ENCODE measurements at regions of chr9 and their contacts with region 1.

Region 1: DNA sequence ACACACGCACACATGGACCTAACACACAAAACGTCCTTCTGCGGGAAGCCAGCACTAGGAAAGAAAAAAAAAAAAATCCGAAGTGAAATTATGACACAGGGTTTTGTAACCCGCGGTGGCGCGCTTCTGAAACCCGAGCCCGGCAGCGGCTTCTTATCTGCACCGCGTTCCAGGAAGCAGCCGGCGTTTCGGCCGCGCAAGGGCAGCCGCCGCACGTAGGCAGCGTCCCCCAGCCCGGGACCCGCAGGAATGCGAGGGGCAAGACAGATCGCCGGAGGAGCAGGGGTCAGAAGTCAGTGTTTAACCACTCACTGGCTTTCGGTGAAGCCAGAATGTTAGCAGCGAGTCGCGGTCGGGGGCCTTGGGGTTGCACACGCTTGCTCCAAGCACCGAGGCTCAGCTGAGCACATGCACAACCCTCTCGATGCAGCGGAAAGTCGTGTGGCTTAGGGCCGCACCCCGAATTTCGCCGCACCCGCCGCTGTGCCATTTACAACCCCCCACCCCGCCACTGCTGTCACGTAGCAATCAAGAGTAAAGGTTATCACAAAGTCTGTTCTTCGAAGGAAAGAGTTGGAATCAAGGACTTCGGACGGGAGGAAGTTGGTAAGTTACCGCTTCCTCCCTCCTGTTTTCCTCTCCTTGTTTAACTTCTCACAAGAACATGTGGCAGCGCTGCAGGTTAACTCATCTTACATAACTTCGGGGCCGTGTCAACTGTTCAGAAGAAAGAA is 167.9 kb downstream of the AUH start:
- DNase-seq: peak; percentile 52
- ATAC-seq: peak; percentile 72
- H3K4me3 Mint-ChIP-seq: peak overlapping the region; percentile 86
- H3K27ac Mint-ChIP-seq: peak overlapping the region; percentile 79
- H3K4me1 Mint-ChIP-seq: peaks cover 30% of the 10 kb centered on the region
- H3K27me3 Mint-ChIP-seq: no peaks in the 10 kb centered on the region
- CTCF ChIP-seq: no peak

Region 2: DNA sequence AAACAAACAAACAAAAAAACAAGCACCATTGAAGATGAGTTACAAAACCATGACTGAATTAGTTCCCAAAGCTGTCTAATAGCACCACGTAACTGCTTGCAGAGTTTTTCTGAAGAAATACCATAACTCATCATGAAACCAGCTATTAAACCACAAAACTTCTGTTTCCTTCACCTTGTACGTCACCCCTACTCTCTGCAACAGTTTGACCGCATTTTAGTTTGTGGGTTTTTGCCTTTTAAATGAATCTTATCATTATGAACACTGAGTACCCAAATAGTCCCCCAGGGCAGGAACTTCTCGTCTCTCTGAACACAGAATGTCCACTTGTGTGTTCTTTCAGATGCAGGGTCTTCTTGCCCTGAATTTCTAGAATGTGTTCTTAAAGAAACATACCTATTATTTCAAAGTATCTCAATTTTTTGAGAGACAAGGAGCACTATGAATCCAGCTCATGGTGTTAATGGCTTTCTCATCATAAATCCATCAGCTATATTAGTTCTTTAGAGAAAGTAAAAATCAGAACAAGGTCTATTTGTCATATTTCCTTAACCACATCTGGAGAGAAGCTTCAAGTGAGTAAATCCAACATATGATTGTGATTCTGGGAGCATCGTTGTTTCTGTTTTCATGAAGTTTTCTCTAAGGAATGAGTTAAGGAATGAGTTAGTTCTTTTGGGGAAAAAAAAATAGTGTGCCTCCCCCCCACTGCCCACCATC is 42.7 kb before region 1 on chr9:
- CTCF ChIA-PET with region 1: no interaction called
- POLR2A ChIA-PET with region 1: interaction called, 15 read pairs
- intact Hi-C with region 1: loop called (anchors 1 kb)
- DNase-seq: no peak
- ATAC-seq: peak; percentile 77
- H3K4me3 Mint-ChIP-seq: peak overlapping the region; percentile 30
- H3K27ac Mint-ChIP-seq: peak overlapping the region; percentile 62
- H3K4me1 Mint-ChIP-seq: peaks cover 50% of the 10 kb centered on the region
- H3K27me3 Mint-ChIP-seq: no peaks in the 10 kb centered on the region
- CTCF ChIP-seq: no peak

Region 3: GRCh38 chr9:91164724-91165520 is 28.9 kb before region 1 on chr9:
- CTCF ChIA-PET with region 1: no interaction called
- POLR2A ChIA-PET with region 1: no interaction called
- intact Hi-C with region 1: loop called (anchors 2 kb)
- DNase-seq: no peak
- ATAC-seq: peak; percentile 59
- H3K4me3 Mint-ChIP-seq: no peak overlapping the region
- H3K27ac Mint-ChIP-seq: no peak overlapping the region
- H3K4me1 Mint-ChIP-seq: peaks cover 37% of the 10 kb centered on the region
- H3K27me3 Mint-ChIP-seq: no peaks in the 10 kb centered on the region
- CTCF ChIP-seq: no peak

Region 4: DNA sequence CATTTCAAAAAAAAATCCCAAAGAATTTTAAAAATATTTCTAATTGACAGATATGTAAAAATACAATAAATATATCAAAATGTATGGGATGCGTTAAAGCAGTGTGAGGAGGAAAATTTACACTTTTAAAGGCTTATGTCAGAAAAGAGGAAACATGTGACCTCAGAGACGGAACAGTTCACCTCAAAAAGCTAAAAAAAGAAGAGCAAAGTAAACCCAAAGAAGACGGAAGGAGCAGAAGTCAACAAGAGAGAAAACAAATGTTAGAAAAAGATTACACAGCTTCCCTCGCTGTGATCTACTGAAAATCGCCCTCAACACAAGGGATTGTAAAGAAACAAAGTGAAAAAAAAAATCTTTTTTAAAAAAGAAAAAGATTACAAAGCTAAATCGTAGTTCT is 19.1 kb before region 1 on chr9:
- CTCF ChIA-PET with region 1: no interaction called
- POLR2A ChIA-PET with region 1: interaction called, 6 read pairs
- intact Hi-C with region 1: loop called (anchors 2 kb)
- DNase-seq: no peak
- ATAC-seq: no peak
- H3K4me3 Mint-ChIP-seq: peak overlapping the region; percentile 44
- H3K27ac Mint-ChIP-seq: peak overlapping the region; percentile 61
- H3K4me1 Mint-ChIP-seq: peaks cover 28% of the 10 kb centered on the region
- H3K27me3 Mint-ChIP-seq: no peaks in the 10 kb centered on the region
- CTCF ChIP-seq: no peak

Region 5: GRCh38 chr9:91207729-91208418 is 14.0 kb after region 1 on chr9:
- CTCF ChIA-PET with region 1: interaction called, 6 read pairs
- POLR2A ChIA-PET with region 1: interaction called, 15 read pairs
- intact Hi-C with region 1: loop called (anchors 1 kb)
- DNase-seq: no peak
- ATAC-seq: peak; percentile 89
- H3K4me3 Mint-ChIP-seq: peak overlapping the region; percentile 47
- H3K27ac Mint-ChIP-seq: peak overlapping the region; percentile 83
- H3K4me1 Mint-ChIP-seq: peaks cover 36% of the 10 kb centered on the region
- H3K27me3 Mint-ChIP-seq: no peaks in the 10 kb centered on the region
- CTCF ChIP-seq: no peak

Region 6: GRCh38 chr9:91245431-91246313 is 51.8 kb after region 1 on chr9:
- CTCF ChIA-PET with region 1: no interaction called
- POLR2A ChIA-PET with region 1: no interaction called
- intact Hi-C with region 1: no loop called
- DNase-seq: no peak
- ATAC-seq: no peak
- H3K4me3 Mint-ChIP-seq: no peak overlapping the region
- H3K27ac Mint-ChIP-seq: no peak overlapping the region
- H3K4me1 Mint-ChIP-seq: peaks cover 15% of the 10 kb centered on the region
- H3K27me3 Mint-ChIP-seq: no peaks in the 10 kb centered on the region
- CTCF ChIP-seq: no peak

Region 7: DNA sequence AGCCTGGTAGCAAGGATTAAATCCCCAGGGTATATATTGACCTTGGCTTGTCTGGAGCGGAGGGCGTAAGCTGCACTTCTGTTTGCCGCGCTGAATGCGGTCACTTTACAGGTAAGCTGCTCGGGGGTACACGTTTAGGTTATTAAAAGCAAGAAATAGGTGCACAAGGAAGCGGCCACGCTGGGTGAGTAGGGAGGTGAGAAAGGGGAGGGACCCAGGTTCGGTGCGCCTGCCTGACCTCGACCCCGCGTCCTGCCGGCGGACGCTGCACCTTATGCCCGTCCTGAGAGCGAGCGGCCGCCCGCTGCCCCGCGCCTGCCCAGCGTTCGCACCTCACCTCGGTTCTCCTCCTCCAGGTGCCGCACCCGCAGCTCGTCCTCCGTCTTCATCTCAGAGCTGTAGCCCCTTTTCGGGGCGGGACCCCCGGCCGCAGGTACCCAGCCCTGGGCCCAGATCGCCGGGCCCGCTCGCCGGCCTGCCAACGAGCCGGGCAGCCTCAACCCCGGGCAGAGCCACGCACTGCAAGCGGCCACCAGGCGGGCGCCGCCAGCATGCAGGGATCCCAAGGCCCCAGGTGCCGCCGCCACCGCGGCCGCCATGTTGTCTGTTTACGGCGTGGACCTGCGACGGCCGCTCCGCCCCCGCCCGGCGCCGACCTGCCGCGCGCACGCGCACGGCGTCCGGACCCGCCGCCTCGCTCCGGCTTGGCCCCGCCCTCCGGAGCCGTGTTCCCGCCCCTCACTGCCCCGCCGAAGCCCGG is 167.6 kb after region 1 on chr9 and contains the start of gene AUH:
- CTCF ChIA-PET with region 1: interaction called, 4 read pairs
- POLR2A ChIA-PET with region 1: interaction called, 3 read pairs
- intact Hi-C with region 1: loop called (anchors 1 kb)
- DNase-seq: peak; percentile 89
- ATAC-seq: peak; percentile 97
- H3K4me3 Mint-ChIP-seq: peak within 1 kb of the TSS; percentile 94
- H3K27ac Mint-ChIP-seq: peak within 1 kb of the TSS; percentile 89
- H3K4me1 Mint-ChIP-seq: peaks cover 34% of the 10 kb centered on the region
- H3K27me3 Mint-ChIP-seq: no peaks in the 10 kb centered on the region
- CTCF ChIP-seq: no peak
- total RNA-seq, gene AUH: 11.1 and 14.0 TPM in 2 replicates

Measured in activated B cell treated with CpG ODN at 0.5 μM for 24 hours (primary cell).